HepG2 (cell line): ENCODE measurements at regions of chr21 and their contacts with region 1.

Region 1: DNA sequence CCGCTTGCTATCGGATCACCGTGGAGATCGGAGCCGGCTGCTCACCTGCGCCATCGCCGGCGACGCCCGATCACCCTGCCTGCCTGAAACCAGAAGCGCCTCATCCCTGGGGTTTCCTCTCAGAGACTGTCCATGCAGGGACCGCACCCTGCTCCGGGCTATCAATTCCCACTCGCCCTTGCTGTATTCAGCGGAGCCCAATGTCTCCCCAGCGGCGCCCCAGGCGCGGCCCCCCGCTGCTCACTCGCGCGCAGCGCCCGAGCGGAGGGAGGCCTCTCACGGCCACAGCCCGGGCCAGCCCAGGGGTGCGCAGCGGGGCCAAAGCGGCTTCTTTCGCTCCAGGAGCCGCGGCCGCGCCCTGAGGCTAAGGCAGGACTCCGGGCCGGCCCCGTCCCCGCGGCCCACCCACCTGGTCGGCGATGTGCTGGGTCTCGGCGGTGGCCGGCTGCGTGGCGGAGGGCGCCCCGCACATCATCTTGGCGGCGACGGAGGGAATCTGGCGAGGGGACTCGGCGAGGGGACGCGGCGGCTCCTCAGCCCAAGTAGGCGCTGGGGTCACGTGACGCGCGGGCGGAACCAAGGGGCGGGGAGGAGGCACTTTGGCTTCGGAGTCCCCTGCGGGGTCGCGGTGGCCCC is at the start of gene CSTB:
- DNase-seq: peak; percentile 37
- ATAC-seq: peak; percentile 79
- H3K4me3 ChIP-seq: peak within 1 kb of the TSS; percentile 83 to 86 (median 83)
- H3K27ac ChIP-seq: peak within 1 kb of the TSS; percentile 67
- H3K4me1 ChIP-seq: peaks cover 60% of the 10 kb centered on the region
- H3K27me3 ChIP-seq: no peaks in the 10 kb centered on the region
- CTCF ChIP-seq: no peak
- EP300 ChIP-seq: no peak
- POLR2A ChIP-seq: peak in 1 of 2 experiments; percentile 80; a peak in 2 of 4 replicates
- RAD21 ChIP-seq: no peak
- total RNA-seq, gene CSTB: 11.7 and 15.8 TPM in 2 replicates

Region 2: DNA sequence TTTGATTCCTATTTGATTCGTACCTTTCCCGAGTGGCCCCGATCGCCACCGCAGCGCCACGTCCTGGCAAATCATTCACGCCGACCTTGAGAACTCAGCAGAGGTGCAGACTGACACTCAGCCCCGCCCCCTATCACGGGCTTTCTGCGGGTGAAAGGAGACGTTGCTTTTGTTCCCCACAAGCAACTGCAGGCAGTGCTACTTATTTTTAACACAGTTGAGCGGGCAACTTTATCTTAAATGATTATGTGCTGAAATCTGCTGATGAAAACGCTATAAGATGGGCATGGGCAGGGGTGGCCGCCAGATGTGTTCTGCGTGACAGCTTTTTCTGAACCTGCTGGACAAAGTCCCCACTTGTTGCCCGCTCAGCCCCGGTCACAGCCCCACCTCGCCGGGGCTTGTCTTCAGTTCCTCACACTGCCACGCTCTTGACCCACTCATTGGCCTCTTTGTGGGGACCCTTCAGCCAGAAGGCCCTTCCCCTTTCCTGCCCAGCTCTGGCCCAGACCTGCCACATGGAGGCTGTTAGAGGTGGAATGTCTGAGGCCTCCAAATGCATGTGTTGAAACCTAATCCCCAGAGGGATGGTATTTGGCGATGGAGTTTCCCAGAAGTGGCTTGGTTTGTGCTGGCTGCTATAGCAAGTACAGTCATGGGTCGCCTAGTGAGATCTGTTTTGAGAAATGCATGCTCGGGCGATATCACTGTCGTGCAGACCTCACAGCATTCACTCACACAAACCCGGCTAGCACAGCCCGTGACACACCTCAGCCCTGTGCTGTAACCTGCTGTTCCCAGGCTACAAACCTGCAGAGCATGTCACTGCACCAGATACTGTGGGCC is 72.7 kb before region 1 on chr21:
- CTCF ChIA-PET with region 1: no interaction called
- POLR2A ChIA-PET with region 1: no interaction called
- in situ Hi-C with region 1: no loop called
- intact Hi-C with region 1: loop called (anchors 10 kb)
- DNase-seq: peak; percentile 57
- ATAC-seq: peak; percentile 67
- H3K4me3 ChIP-seq: peak overlapping the region; percentile 40 to 63 (median 55)
- H3K27ac ChIP-seq: peak overlapping the region; percentile 66
- H3K4me1 ChIP-seq: peaks cover 82% of the 10 kb centered on the region
- H3K27me3 ChIP-seq: peaks cover 0 to 2% of the 10 kb centered on the region in 2 experiments; a peak in 2 of 5 replicates
- CTCF ChIP-seq: peak; percentile 33
- EP300 ChIP-seq: no peak
- POLR2A ChIP-seq: peak in 1 of 2 experiments; percentile 35; a peak in 1 of 4 replicates
- RAD21 ChIP-seq: no peak

Region 3: DNA sequence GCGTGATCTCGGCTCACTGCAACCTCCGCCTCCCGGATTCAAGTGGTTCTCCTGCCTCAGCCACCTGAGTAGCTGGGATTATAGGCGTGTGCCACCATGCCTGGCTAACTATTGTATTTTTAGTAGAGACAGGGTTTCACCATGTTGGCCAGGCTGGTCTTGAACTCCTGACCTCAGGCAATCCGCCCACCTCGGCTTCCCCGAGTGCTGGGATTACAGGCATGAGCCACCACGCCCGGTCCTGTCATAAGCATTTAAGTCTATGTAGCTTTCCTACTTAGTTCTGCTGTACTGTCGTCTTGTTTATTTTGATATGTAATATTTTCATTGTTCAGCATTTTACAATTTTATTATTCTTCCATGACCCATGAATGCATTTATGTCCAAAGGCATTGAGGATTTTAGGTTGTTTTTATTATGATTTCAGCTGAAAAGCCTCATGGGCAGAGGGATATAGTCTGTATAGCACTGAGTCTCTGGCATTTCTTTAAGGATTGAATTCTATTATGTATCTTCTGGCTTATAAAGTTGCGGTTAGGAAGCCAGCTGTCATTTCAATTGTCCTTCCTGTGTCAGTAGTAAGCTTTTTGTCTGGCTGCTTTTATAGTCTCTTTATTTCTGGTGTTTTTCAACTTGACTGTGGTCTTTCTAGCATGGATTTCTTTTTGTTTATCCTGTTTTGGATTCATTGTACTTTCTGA is 98.3 kb after region 1 on chr21:
- CTCF ChIA-PET with region 1: no interaction called
- POLR2A ChIA-PET with region 1: no interaction called
- in situ Hi-C with region 1: no loop called
- intact Hi-C with region 1: no loop called
- DNase-seq: no peak
- ATAC-seq: no peak
- H3K4me3 ChIP-seq: no peak overlapping the region
- H3K27ac ChIP-seq: no peak overlapping the region
- H3K4me1 ChIP-seq: peaks cover 17% of the 10 kb centered on the region
- H3K27me3 ChIP-seq: no peaks in the 10 kb centered on the region
- CTCF ChIP-seq: no peak
- EP300 ChIP-seq: no peak
- POLR2A ChIP-seq: no peak
- RAD21 ChIP-seq: no peak